H1 (cell line): ENCODE measurements at regions of chr16 and their contacts with region 1.

Region 1: DNA sequence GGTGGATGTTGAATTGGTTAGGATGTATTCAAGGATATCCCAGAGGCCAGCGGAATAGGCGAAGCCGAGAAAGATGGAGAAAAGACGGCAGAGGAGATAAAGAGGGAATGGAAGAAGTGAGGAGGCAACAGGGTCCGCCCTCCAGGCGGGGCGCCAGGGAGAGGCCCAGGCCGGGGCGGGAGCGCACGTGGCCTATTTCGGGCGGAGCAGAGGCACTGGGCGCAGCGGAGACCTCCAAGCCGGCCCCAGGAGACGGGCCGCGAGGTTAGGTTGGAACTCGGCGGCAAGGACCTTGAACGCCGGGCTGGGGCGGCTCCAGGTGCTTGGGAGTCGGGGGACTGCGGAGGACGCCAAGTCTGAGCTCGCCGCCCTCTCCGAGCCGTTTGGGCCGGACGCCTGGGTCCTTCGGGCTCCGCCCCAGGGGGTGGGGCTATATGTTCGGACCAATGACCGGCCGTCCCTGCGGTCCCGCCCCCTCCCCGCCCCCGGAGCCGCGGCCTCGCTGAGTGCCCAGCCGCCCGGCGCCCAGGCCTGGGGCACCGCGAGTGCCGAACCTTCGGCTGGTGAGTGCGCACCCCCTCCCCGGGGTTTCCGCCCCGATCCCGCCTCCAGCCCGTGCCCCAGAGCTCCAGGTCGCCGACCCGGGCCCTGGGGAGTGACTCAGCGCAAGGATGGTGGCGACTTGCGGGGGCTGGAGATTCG is at the start of gene ZNF771:
- DNase-seq: peak; percentile 78 to 98
- H3K4me3 ChIP-seq: peak within 1 kb of the TSS; percentile 74 to 85 (median 81)
- H3K27ac ChIP-seq: peak within 1 kb of the TSS; percentile 82
- H3K4me1 ChIP-seq: peaks cover 3 to 12% (median 4%) of the 10 kb centered on the region in 4 experiments; a peak in 6 of 7 replicates
- H3K27me3 ChIP-seq: no peaks in the 10 kb centered on the region; a peak in 1 of 7 replicates
- CTCF ChIP-seq: no peak
- EP300 ChIP-seq: no peak
- POLR2A ChIP-seq: peak; percentile 65 to 92
- RAD21 ChIP-seq: 0 out of 4 replicates have a peak, but pooled peaks of 1 of the 2 experiments have one; percentile 7
- total RNA-seq, gene ZNF771: 9.6 and 10.6 TPM in 2 replicates

Region 2: GRCh38 chr16:30355144-30355894 is 51.9 kb before region 1 on chr16 and contains the start of gene CD2BP2:
- CTCF ChIA-PET with region 1: interaction called, 20 read pairs
- POLR2A ChIA-PET with region 1: interaction called, 16 read pairs
- DNase-seq: peak; percentile 92 to 96
- H3K4me3 ChIP-seq: peak within 1 kb of the TSS; percentile 51 to 93 (median 81)
- H3K27ac ChIP-seq: peak within 1 kb of the TSS; percentile 97
- H3K4me1 ChIP-seq: peaks cover 0 to 12% (median 6%) of the 10 kb centered on the region in 4 experiments; a peak in 5 of 7 replicates
- H3K27me3 ChIP-seq: no peaks in the 10 kb centered on the region
- CTCF ChIP-seq: peak in 2 of 3 experiments; percentile 5 to 10; a peak in 2 of 4 replicates
- EP300 ChIP-seq: peak in 1 of 2 experiments; percentile 17; a peak in 1 of 3 replicates
- POLR2A ChIP-seq: peak; percentile 67 to 90
- RAD21 ChIP-seq: 0 out of 4 replicates have a peak, but pooled peaks of 1 of the 2 experiments have one; percentile 1
- total RNA-seq, gene CD2BP2: 55.3 and 55.4 TPM in 2 replicates

Region 3: GRCh38 chr16:30370444-30371247 is 36.6 kb before region 1 on chr16 and contains the start of gene TBC1D10B:
- CTCF ChIA-PET with region 1: interaction called, 11 read pairs
- POLR2A ChIA-PET with region 1: interaction called, 151 read pairs
- DNase-seq: peak; percentile 97 to 100
- H3K4me3 ChIP-seq: peak within 1 kb of the TSS; percentile 43 to 81 (median 52)
- H3K27ac ChIP-seq: no peak within 1 kb of the TSS
- H3K4me1 ChIP-seq: peaks cover 0 to 17% (median 11%) of the 10 kb centered on the region in 4 experiments; a peak in 6 of 7 replicates
- H3K27me3 ChIP-seq: no peaks in the 10 kb centered on the region
- CTCF ChIP-seq: peak in 2 of 3 experiments; percentile 25 to 31; a peak in 2 of 4 replicates
- EP300 ChIP-seq: no peak
- POLR2A ChIP-seq: no peak
- RAD21 ChIP-seq: no peak
- total RNA-seq, gene TBC1D10B: 28.6 and 29.4 TPM in 2 replicates

Region 4: DNA sequence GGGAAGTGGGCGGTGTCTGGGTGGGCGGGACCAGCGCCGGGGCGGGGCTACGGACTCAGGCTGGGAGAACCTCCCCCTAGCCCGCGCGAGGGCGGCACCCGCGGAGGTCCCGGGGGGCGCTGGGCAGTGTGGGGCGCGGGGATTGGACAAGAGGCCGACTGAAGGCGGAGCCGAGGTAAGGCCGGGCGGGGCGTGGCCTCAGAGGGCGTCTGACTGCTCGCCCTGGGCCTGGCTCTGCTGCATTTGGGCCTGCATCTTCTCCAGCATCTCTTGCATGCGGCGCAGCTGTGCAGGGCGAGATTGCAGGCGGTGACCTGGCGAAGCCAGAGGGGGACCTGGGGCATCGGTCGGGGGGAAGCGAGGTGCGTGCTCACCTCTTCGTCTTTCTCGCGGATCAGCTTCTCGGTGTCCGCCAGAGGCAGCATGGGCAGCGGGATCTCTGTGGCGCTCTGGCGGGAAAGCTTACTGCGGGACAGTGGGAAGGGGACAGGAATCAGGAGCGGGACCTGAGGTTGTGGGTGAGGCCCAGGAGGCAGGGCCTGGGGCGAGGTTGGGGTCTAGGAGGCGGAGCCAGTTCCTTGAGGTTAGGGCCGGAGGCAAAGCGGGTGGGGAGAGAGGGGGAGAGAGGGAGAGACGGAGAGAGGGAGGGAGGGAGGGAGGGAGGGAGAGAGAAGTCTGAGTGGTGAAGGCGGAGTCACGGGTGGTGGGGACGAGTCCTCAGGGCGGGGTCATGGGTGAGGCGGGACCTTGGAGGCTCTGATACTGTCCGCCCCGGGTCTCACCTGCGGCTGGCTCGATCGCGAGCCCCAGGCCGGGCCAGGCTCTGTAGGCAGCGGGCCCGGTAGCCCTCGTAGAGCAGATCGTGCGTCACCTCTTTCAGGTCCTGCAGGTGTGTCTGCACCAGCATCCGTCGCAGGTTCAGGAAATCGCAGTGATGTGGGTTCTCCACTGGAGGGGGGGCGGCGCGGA is 28.7 kb before region 1 on chr16:
- CTCF ChIA-PET with region 1: interaction called, 8 read pairs
- POLR2A ChIA-PET with region 1: interaction called, 151 read pairs
- DNase-seq: peak; percentile 92 to 99
- H3K4me3 ChIP-seq: peak overlapping the region; percentile 70 to 88 (median 82)
- H3K27ac ChIP-seq: peak overlapping the region; percentile 92
- H3K4me1 ChIP-seq: peaks cover 0 to 9% (median 5%) of the 10 kb centered on the region in 4 experiments; a peak in 5 of 7 replicates
- H3K27me3 ChIP-seq: no peaks in the 10 kb centered on the region
- CTCF ChIP-seq: no peak
- EP300 ChIP-seq: no peak
- POLR2A ChIP-seq: peak; percentile 29 to 64; a peak in 2 of 3 replicates
- RAD21 ChIP-seq: no peak

Region 5: GRCh38 chr16:30395155-30395991 is 11.9 kb before region 1 on chr16 and contains the start of gene ZNF48:
- CTCF ChIA-PET with region 1: interaction called, 23 read pairs
- POLR2A ChIA-PET with region 1: interaction called, 61 read pairs
- DNase-seq: peak in 1 of 2 experiments; percentile 89
- H3K4me3 ChIP-seq: peak within 1 kb of the TSS; percentile 72 to 98 (median 92)
- H3K27ac ChIP-seq: peak within 1 kb of the TSS; percentile 88
- H3K4me1 ChIP-seq: peaks cover 0 to 15% (median 9%) of the 10 kb centered on the region in 4 experiments; a peak in 6 of 7 replicates
- H3K27me3 ChIP-seq: no peaks in the 10 kb centered on the region
- CTCF ChIP-seq: peak; percentile 43 to 69 (median 49)
- EP300 ChIP-seq: no peak
- POLR2A ChIP-seq: peak in 1 of 2 experiments; percentile 73; a peak in 2 of 3 replicates
- RAD21 ChIP-seq: peak; percentile 10 to 45; a peak in 2 of 4 replicates
- total RNA-seq, gene ZNF48: 40.6 and 41.2 TPM in 2 replicates

Region 6: DNA sequence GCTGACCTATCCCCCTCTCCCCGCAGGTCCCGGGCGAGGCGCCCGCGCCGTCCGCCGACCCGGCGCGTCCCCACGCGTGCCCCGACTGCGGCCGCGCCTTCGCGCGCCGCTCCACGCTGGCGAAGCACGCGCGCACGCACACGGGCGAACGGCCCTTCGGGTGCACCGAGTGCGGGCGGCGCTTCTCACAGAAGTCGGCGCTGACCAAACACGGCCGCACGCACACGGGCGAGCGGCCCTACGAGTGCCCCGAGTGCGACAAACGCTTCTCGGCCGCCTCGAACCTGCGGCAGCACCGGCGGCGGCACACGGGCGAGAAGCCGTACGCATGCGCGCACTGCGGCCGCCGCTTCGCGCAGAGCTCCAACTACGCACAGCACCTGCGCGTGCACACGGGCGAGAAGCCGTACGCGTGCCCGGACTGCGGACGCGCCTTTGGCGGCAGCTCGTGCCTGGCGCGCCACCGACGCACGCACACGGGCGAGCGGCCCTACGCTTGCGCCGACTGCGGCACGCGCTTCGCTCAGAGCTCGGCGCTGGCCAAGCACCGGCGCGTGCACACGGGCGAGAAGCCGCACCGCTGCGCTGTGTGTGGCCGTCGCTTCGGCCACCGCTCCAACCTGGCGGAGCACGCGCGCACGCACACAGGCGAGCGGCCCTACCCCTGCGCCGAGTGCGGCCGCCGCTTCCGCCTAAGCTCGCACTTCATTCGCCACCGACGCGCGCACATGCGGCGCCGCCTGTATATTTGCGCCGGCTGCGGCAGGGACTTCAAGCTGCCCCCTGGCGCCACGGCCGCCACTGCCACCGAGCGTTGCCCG is 10.5 kb after region 1 on chr16:
- CTCF ChIA-PET with region 1: interaction called, 13 read pairs
- POLR2A ChIA-PET with region 1: interaction called, 34 read pairs
- DNase-seq: peak; percentile 86 to 94
- H3K4me3 ChIP-seq: peak overlapping the region; percentile 36 to 60 (median 50)
- H3K27ac ChIP-seq: no peak overlapping the region
- H3K4me1 ChIP-seq: peaks cover 3 to 6% (median 5%) of the 10 kb centered on the region in 4 experiments; a peak in 6 of 7 replicates
- H3K27me3 ChIP-seq: no peaks in the 10 kb centered on the region
- CTCF ChIP-seq: peak; percentile 21 to 37 (median 29); a peak in 2 of 4 replicates
- EP300 ChIP-seq: no peak
- POLR2A ChIP-seq: peak in 1 of 2 experiments; percentile 52; a peak in 1 of 3 replicates
- RAD21 ChIP-seq: peak; percentile 16 to 29; a peak in 2 of 4 replicates

Region 7: GRCh38 chr16:30602616-30603277 is 195.5 kb after region 1 on chr16:
- CTCF ChIA-PET with region 1: interaction called, 12 read pairs
- POLR2A ChIA-PET with region 1: interaction called, 4 read pairs
- DNase-seq: no peak
- H3K4me3 ChIP-seq: no peak overlapping the region
- H3K27ac ChIP-seq: no peak overlapping the region
- H3K4me1 ChIP-seq: no peaks in the 10 kb centered on the region
- H3K27me3 ChIP-seq: no peaks in the 10 kb centered on the region
- CTCF ChIP-seq: no peak
- EP300 ChIP-seq: no peak
- POLR2A ChIP-seq: no peak
- RAD21 ChIP-seq: no peak